Caco-2 (cell line): ENCODE measurements at regions of chr13 and their contacts with region 1.

Region 1: GRCh38 chr13:84774111-84774510 is 891.8 kb upstream of the SLITRK1 start:
- DNase-seq: no peak
- H3K4me3 ChIP-seq: no peak overlapping the region
- H3K4me3 Mint-ChIP-seq: no peak overlapping the region
- H3K27ac Mint-ChIP-seq: no peak overlapping the region
- H3K4me1 ChIP-seq: no peaks in the 10 kb centered on the region
- H3K4me1 Mint-ChIP-seq: peaks cover 6% of the 10 kb centered on the region
- H3K27me3 ChIP-seq: no peaks in the 10 kb centered on the region
- H3K27me3 Mint-ChIP-seq: peaks cover 2% of the 10 kb centered on the region
- CTCF ChIP-seq: no peak

Region 2: DNA sequence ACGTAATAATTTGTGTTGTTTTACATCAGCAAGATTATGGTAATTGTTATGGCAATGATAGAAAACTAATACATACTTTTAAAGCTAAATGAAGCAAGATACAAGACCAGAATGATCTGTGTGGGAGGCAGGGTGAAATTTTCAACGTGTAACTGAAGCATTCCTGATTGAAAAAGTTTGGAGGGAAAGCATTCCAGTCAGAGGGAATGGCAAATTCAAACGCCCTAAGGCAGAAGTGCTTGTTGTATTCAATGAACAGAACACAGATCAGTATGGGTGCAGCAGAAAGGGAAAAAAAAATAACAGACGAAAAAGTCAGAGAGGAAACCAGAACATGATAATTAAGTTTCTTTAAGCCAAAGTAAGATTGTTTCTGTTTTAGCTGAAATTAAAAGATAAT is 36.7 kb after region 1 on chr13:
- CTCF ChIA-PET with region 1: no interaction called
- POLR2A ChIA-PET with region 1: no interaction called
- intact Hi-C with region 1: loop called (anchors 1 kb)
- DNase-seq: no peak
- H3K4me3 ChIP-seq: no peak overlapping the region
- H3K4me3 Mint-ChIP-seq: no peak overlapping the region
- H3K27ac Mint-ChIP-seq: no peak overlapping the region
- H3K4me1 ChIP-seq: no peaks in the 10 kb centered on the region
- H3K4me1 Mint-ChIP-seq: no peaks in the 10 kb centered on the region
- H3K27me3 ChIP-seq: no peaks in the 10 kb centered on the region
- H3K27me3 Mint-ChIP-seq: peaks cover 5% of the 10 kb centered on the region
- CTCF ChIP-seq: no peak

Region 3: GRCh38 chr13:84834201-84834600 is 60.1 kb after region 1 on chr13:
- CTCF ChIA-PET with region 1: no interaction called
- POLR2A ChIA-PET with region 1: no interaction called
- intact Hi-C with region 1: no loop called
- DNase-seq: no peak
- H3K4me3 ChIP-seq: no peak overlapping the region
- H3K4me3 Mint-ChIP-seq: no peak overlapping the region
- H3K27ac Mint-ChIP-seq: no peak overlapping the region
- H3K4me1 ChIP-seq: no peaks in the 10 kb centered on the region
- H3K4me1 Mint-ChIP-seq: no peaks in the 10 kb centered on the region
- H3K27me3 ChIP-seq: no peaks in the 10 kb centered on the region; the same call in 1 of the 2 replicates
- H3K27me3 Mint-ChIP-seq: no peaks in the 10 kb centered on the region
- CTCF ChIP-seq: no peak